Breast epithelium (tissue), 4 donors: ENCODE measurements at regions of chr3 and their contacts with region 1.

Region 1: GRCh38 chr3:133905376-133905775 is 9.7 kb upstream of the RAB6B start:
- DNase-seq: no peak
- H3K4me3 ChIP-seq: no peak overlapping the region
- H3K27ac ChIP-seq: no peak overlapping the region
- H3K4me1 ChIP-seq: no peaks in the 10 kb centered on the region
- H3K27me3 ChIP-seq: no peaks in the 10 kb centered on the region
- CTCF ChIP-seq: no peak
- POLR2A ChIP-seq: no peak

Region 2: GRCh38 chr3:134743000-134743399 is 837.6 kb after region 1 on chr3:
- intact Hi-C with region 1: loop called (anchors 5 kb)
- DNase-seq: no peak
- H3K4me3 ChIP-seq: no peak overlapping the region
- H3K27ac ChIP-seq: no peak overlapping the region
- H3K4me1 ChIP-seq: no peaks in the 10 kb centered on the region
- H3K27me3 ChIP-seq: no peaks in the 10 kb centered on the region
- CTCF ChIP-seq: no peak
- POLR2A ChIP-seq: no peak